ENCODE measurements at regions of chr6 and their contacts with region 1.

Region 1: DNA sequence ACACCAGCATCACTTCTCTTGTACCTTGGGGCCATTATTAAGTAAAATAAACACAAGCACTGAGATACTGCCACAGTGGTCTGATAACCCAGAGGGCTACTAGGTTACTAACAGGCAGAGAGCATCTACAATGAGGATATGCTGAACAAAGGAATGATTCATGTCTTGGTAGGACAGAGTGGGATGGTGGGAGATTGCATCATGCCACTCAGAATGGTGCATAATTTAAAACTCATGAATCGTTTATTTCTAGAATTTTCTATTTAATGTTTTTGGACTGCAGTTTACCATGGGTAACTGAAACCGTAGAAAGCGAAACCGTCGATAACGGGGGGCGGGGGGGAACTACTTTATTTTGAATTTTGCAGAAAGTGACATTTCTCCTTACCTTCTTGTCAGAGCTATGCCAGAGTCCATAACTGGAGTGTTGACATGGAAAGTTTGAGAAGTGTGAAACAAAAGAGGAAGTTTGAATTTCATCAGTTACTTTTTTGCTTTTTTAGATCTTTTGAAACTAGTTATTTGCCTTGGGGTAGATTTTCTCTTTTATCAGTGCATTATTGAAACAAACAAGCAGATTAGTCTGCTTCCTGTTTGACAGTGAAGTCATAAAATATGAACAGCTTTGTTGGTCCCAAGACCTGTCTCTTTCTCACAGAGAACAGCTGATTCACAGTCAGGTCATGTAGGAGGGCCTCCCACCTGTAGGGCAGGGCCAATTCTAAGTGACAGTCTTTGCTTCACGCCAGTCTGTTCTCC is 124.9 kb downstream of the KLHL32 start:
- DNase-seq: no peak
- ATAC-seq: peak; percentile 74
- H3K4me3 Mint-ChIP-seq: peak overlapping the region; percentile 50
- H3K27ac Mint-ChIP-seq: peak overlapping the region; percentile 51
- H3K4me1 Mint-ChIP-seq: peaks cover 23% of the 10 kb centered on the region
- H3K27me3 Mint-ChIP-seq: no peaks in the 10 kb centered on the region
- CTCF ChIP-seq: no peak

Region 2: DNA sequence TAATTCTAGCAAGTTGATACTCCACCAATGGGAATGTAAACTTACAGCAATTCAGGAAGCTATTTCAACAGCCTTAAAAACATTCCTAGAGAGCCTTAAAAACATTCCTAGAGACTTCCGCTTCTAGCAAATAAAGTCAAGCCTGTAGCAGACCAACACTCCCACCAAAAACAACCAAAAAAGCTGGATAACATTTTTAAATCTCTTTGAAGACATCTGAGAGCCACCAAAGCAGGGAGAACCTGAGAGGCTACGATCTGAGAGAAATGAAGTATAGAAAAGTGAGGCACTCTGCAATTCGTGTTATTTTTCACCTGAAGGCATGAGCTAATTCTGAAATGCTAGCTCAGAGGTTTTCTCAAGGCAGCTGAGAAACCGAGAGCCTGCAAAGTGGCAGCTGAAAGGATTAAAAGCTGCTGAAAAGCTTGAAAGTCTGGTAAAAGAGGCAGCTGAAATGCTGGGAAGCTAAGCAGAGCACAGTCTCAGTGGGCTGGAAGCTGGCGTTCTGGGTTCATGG is 233.1 kb before region 1 on chr6:
- CTCF ChIA-PET with region 1: no interaction called
- POLR2A ChIA-PET with region 1: no interaction called
- intact Hi-C with region 1: no loop called
- DNase-seq: no peak
- ATAC-seq: no peak
- H3K4me3 Mint-ChIP-seq: no peak overlapping the region
- H3K27ac Mint-ChIP-seq: no peak overlapping the region
- H3K4me1 Mint-ChIP-seq: no peaks in the 10 kb centered on the region
- H3K27me3 Mint-ChIP-seq: peaks cover 11% of the 10 kb centered on the region
- CTCF ChIP-seq: no peak

Region 3: GRCh38 chr6:96923871-96924493 is 125.5 kb before region 1 on chr6:
- CTCF ChIA-PET with region 1: no interaction called
- POLR2A ChIA-PET with region 1: no interaction called
- intact Hi-C with region 1: loop called (anchors 10 kb)
- DNase-seq: no peak
- ATAC-seq: peak; percentile 10
- H3K4me3 Mint-ChIP-seq: peak overlapping the region; percentile 94
- H3K27ac Mint-ChIP-seq: peak overlapping the region; percentile 92
- H3K4me1 Mint-ChIP-seq: peaks cover 24% of the 10 kb centered on the region
- H3K27me3 Mint-ChIP-seq: peaks cover 3% of the 10 kb centered on the region
- CTCF ChIP-seq: no peak

Region 4: DNA sequence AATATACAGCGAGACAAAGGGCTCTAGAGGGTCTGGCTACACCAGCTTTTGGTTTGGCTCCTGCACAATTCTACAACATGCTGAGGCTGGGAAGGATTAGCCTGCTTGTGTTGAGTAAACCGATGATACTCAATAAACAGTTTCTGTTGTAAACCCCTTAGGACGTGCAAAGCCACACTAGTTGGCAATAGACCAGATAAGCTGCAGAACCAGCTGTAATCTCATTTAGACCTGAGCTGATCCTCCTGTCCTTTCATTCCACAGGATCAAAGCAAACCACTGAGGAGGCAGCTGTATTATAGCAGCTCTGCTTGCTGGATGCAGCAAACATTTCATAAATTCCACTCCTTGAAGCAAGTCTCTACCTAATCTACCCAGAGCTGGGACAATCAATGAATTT is 153.9 kb after region 1 on chr6:
- CTCF ChIA-PET with region 1: no interaction called
- POLR2A ChIA-PET with region 1: no interaction called
- intact Hi-C with region 1: no loop called
- DNase-seq: no peak
- ATAC-seq: no peak
- H3K4me3 Mint-ChIP-seq: no peak overlapping the region
- H3K27ac Mint-ChIP-seq: no peak overlapping the region
- H3K4me1 Mint-ChIP-seq: no peaks in the 10 kb centered on the region
- H3K27me3 Mint-ChIP-seq: no peaks in the 10 kb centered on the region
- CTCF ChIP-seq: no peak